ENCODE measurements at regions of chr19 and their contacts with region 1.

Region 1: GRCh38 chr19:36128392-36128736 is 11.5 kb upstream of the CAPNS1 start:
- DNase-seq: no peak
- ATAC-seq: peak; percentile 34
- H3K4me3 ChIP-seq: peak overlapping the region; percentile 51
- H3K27ac ChIP-seq: peak overlapping the region; percentile 89
- H3K4me1 ChIP-seq: peaks cover 18% of the 10 kb centered on the region
- H3K27me3 ChIP-seq: no peaks in the 10 kb centered on the region
- CTCF ChIP-seq: no peak

Region 2: DNA sequence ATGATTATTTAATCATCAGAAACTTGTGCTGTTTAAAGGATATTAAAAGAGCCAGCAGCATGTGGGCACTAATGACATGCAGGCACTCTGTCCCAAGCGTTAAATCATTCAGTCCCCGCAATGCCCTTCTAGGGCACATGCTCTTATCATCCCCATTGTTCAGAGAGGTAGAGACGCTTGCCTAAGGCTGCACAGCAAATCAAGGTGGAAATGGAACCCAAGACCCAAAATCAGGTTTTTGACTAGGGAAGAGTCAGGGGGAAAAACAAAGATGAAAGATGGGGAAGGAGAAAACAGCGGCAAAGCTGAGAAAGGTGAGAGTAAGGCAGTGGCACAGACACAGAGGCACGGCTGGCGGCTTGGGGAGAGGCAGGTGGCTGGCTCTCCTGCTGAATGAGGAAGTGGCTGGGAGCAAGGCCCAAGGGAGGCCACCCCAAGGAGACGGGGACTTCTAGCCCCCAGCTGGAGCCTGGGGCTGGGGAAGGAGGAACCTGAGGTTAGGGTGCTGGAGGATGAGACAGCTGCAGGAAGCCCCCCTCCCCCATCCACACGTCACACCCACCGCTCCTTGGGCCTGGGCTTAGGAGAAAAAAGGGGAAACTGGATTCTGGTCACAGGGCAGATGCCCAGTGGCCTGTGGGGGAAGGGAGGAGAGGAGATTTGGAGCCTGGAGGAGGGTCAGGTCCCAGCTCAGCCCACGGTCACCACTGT is 219.2 kb before region 1 on chr19:
- intact Hi-C with region 1: no loop called
- DNase-seq: peak; percentile 92
- ATAC-seq: peak; percentile 94
- H3K4me3 ChIP-seq: peak overlapping the region; percentile 41
- H3K27ac ChIP-seq: peak overlapping the region; percentile 74
- H3K4me1 ChIP-seq: peaks cover 11% of the 10 kb centered on the region
- H3K27me3 ChIP-seq: no peaks in the 10 kb centered on the region
- CTCF ChIP-seq: no peak

Region 3: GRCh38 chr19:36009220-36009619 is 119.1 kb before region 1 on chr19:
- intact Hi-C with region 1: no loop called
- DNase-seq: peak; percentile 87
- ATAC-seq: peak; percentile 72
- H3K4me3 ChIP-seq: peak overlapping the region; percentile 53
- H3K27ac ChIP-seq: peak overlapping the region; percentile 30
- H3K4me1 ChIP-seq: peaks cover 14% of the 10 kb centered on the region
- H3K27me3 ChIP-seq: no peaks in the 10 kb centered on the region
- CTCF ChIP-seq: no peak

Region 4: GRCh38 chr19:36032251-36033104 is 95.9 kb before region 1 on chr19 and contains the start of gene CLIP3:
- intact Hi-C with region 1: no loop called
- DNase-seq: no peak
- ATAC-seq: peak; percentile 33
- H3K4me3 ChIP-seq: peak within 1 kb of the TSS; percentile 48
- H3K27ac ChIP-seq: peak within 1 kb of the TSS; percentile 30
- H3K4me1 ChIP-seq: no peaks in the 10 kb centered on the region
- H3K27me3 ChIP-seq: no peaks in the 10 kb centered on the region
- CTCF ChIP-seq: no peak
- total RNA-seq, gene CLIP3: 10.5 TPM

Region 5: DNA sequence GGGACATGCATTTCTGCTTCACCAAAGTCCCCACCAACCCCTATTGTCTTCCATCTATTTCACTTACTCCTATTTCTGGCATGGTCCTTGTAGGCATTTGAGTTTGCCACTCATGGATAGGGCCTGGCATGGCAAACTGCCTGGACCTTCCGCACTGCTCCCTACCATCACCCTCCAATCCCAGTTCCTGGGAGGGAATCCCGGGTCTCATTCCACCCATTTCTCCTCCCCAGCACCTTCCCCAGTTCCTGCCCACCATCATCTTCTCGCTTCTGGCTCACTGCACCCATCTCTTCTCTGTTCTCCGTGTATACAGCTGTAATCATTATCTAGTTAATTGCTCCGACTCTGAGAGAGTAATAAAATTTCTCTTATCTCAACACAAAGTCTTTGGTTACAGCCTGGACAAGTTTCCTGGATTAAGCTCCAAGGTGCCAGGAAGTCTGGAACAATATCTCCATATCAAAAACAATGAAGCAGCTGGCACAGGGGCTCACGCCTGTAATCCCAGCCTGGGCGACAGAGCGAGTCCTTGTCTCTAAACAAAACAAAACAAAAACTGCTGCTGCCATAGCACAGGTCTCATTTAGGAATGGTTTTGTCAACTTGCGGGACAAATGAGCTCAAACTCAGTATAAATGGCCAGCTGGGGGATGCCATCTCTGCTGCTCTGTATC is 40.9 kb after region 1 on chr19:
- intact Hi-C with region 1: loop called (anchors 5 kb)
- DNase-seq: no peak
- ATAC-seq: peak; percentile 38
- H3K4me3 ChIP-seq: no peak overlapping the region
- H3K27ac ChIP-seq: peak overlapping the region; percentile 70
- H3K4me1 ChIP-seq: peaks cover 3% of the 10 kb centered on the region
- H3K27me3 ChIP-seq: no peaks in the 10 kb centered on the region
- CTCF ChIP-seq: no peak

Region 6: GRCh38 chr19:36182612-36183244 is 54.4 kb after region 1 on chr19:
- intact Hi-C with region 1: no loop called
- DNase-seq: no peak
- ATAC-seq: peak; percentile 50
- H3K4me3 ChIP-seq: no peak overlapping the region
- H3K27ac ChIP-seq: no peak overlapping the region
- H3K4me1 ChIP-seq: no peaks in the 10 kb centered on the region
- H3K27me3 ChIP-seq: no peaks in the 10 kb centered on the region
- CTCF ChIP-seq: no peak